A549 (cell line): ENCODE measurements at regions of chr16 and their contacts with region 1.

Region 1: DNA sequence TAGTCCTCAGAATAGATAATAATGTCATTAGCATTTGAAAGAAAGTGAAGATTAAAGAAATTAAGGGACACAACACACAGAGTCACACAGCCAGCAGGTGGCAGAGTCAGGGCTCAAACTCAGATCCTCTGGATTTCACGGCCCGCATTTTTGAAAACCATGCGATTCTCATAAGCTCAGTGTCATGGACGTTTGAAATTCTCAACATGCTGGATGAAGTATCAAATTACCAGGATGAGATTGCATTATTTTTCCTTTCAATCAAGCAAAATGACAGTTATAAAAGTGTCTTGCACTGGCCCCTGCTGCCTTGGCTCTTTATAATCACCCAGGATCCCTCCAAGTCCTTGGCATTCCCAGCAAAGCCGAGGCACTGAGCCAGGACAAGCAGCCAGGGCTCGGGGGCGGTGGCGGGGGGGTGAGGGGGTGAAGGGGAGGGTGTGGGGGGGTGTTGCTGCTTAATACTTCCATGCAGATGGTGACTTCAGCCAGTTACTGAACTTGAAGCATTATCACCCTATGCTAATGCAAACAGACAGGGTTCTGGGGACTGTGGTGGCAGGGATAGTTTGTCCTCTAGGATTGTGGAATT is 6.6 kb upstream of the BMERB1 start:
- DNase-seq: peak; percentile 71 to 82
- ATAC-seq: peak; percentile 88 to 94
- H3K4me3 ChIP-seq: no peak overlapping the region
- H3K27ac ChIP-seq: peak overlapping the region; percentile 67 to 83
- H3K4me1 ChIP-seq: peaks cover 9% of the 10 kb centered on the region
- CTCF ChIP-seq: peak; percentile 78
- EP300 ChIP-seq: no peak
- POLR2A ChIP-seq: no peak
- RAD21 ChIP-seq: peak; percentile 81 to 82

Region 2: DNA sequence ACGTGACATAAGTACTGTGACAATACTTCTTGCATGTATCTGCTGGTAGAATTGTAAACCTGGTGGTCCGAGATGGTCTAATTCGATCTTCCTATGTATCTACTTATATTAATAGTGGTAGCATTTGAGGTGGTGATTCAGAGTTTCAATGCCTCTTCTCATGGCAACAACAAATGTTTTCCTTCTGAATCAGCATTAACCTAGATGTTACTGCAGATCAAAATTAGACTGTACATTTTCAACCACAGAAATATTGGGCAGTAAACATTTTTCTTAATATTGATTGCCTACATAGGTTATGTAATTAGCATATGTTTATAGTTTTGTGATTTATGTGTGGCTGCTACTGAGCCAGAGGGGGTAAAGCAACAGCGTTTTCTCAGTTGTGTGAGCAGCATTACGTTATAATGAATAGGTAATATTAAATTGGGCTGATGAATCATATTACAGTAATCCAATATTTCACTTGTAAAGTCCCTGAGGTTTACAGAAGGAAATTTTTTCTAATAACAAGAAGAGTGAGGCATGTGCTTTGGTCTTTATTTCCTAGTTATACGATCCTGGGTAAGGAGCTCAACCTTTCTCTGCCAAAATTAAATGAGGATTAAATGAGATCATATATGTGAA is 12.2 kb before region 1 on chr16:
- CTCF ChIA-PET with region 1: interaction called, 25 read pairs
- POLR2A ChIA-PET with region 1: no interaction called
- DNase-seq: no peak
- ATAC-seq: no peak
- H3K4me3 ChIP-seq: no peak overlapping the region
- H3K27ac ChIP-seq: peak overlapping the region in 1 of 2 experiments; percentile 54; a peak in 1 of 6 replicates
- H3K4me1 ChIP-seq: peaks cover 19% of the 10 kb centered on the region; the same call in 2 of the 3 replicates
- CTCF ChIP-seq: no peak
- EP300 ChIP-seq: no peak
- POLR2A ChIP-seq: no peak
- RAD21 ChIP-seq: no peak

Region 3: DNA sequence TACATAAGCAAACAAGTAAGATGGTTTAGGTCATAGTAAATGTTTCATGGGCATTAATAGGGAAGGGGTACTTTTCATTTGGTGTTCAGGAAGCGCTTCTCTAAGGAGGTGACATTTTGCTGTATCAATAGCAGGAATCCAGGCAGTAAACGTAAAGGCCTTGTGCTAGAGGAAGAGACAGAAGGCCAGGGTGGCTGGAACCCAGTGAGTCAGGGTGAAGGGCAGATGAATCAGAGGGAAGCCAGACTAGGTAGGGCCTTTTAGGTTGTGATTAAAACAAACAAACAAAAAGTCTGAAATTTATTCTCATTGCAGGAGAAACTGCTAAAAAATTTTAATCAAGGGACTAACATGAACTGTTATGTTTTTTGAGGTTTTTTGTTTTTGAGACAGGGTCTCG is 13.1 kb after region 1 on chr16:
- CTCF ChIA-PET with region 1: interaction called, 34 read pairs
- POLR2A ChIA-PET with region 1: no interaction called
- DNase-seq: peak; percentile 58 to 86
- ATAC-seq: peak; percentile 86 to 87; a peak in 5 of 6 replicates
- H3K4me3 ChIP-seq: peak overlapping the region; percentile 0; the same call in 1 of the 3 replicates
- H3K27ac ChIP-seq: peak overlapping the region; percentile 85 to 91
- H3K4me1 ChIP-seq: peaks cover 75% of the 10 kb centered on the region
- CTCF ChIP-seq: no peak
- EP300 ChIP-seq: no peak
- POLR2A ChIP-seq: no peak
- RAD21 ChIP-seq: no peak

Region 4: GRCh38 chr16:15566095-15566494 is 138.4 kb after region 1 on chr16:
- CTCF ChIA-PET with region 1: no interaction called
- POLR2A ChIA-PET with region 1: no interaction called
- DNase-seq: no peak
- ATAC-seq: no peak
- H3K4me3 ChIP-seq: no peak overlapping the region
- H3K27ac ChIP-seq: no peak overlapping the region
- H3K4me1 ChIP-seq: peaks cover 7% of the 10 kb centered on the region; the same call in 1 of the 3 replicates
- CTCF ChIP-seq: no peak
- EP300 ChIP-seq: no peak
- POLR2A ChIP-seq: no peak
- RAD21 ChIP-seq: no peak